Endothelial cell of umbilical vein (primary cell): ENCODE measurements at regions of chr10 and their contacts with region 1.

Region 1: GRCh38 chr10:69742928-69743602 is 58.6 kb upstream of the COL13A1 start:
- DNase-seq: peak; percentile 29
- H3K4me3 ChIP-seq: no peak overlapping the region
- H3K27ac ChIP-seq: no peak overlapping the region
- H3K4me1 ChIP-seq: no peaks in the 10 kb centered on the region
- H3K27me3 ChIP-seq: peaks cover 14% of the 10 kb centered on the region in 2 experiments
- CTCF ChIP-seq: peak; percentile 58 to 64
- POLR2A ChIP-seq: no peak

Region 2: GRCh38 chr10:69757553-69758309 is 14.7 kb after region 1 on chr10:
- CTCF ChIA-PET with region 1: interaction called, 11 read pairs
- POLR2A ChIA-PET with region 1: no interaction called
- dilution Hi-C with region 1: no loop called
- intact Hi-C with region 1: no loop called
- DNase-seq: peak; percentile 35
- H3K4me3 ChIP-seq: no peak overlapping the region
- H3K27ac ChIP-seq: no peak overlapping the region
- H3K4me1 ChIP-seq: no peaks in the 10 kb centered on the region
- H3K27me3 ChIP-seq: peaks cover 15 to 26% of the 10 kb centered on the region in 2 experiments
- CTCF ChIP-seq: no peak
- POLR2A ChIP-seq: no peak